MCF 10A (cell line): ENCODE measurements at regions of chr20 and their contacts with region 1.

Region 1: DNA sequence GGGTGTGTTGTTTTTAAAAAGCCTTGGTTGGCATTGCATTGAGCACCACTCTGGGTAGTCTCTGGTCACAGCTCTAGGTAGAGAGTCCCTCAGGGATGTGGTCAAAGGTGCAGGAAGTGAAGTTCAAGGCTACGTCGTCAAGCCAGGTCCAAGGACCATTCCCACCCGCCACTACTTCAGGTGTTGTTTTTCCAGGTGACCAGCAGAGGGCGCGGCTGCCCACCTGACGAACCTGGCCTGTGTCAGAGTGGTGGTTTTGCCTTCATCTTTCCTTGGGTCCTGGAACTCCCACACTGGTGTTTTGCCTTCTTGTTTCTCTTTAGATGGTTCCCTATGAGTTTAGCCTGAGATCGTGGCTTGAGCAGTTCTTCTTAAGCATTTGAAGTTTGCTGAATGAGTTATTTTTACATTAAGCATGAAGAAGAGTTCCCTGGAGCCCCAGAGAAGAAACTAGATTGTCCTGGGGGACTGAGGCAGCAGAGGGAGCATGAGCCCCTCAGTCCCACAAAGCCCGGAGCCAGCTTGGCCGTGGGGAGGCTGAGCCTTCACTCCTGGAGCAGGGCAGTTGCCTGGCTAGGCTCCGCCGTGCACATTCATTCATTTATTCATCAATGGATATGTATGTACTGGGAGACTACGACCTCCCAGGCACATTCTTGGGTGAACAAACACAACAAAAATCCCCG is 5.6 kb upstream of the PHACTR3 start:
- DNase-seq: peak; percentile 53
- H3K4me3 Mint-ChIP-seq: no peak overlapping the region
- H3K27ac Mint-ChIP-seq: no peak overlapping the region
- H3K4me1 Mint-ChIP-seq: no peaks in the 10 kb centered on the region
- H3K27me3 Mint-ChIP-seq: peaks cover 100% of the 10 kb centered on the region
- CTCF ChIP-seq: peak; percentile 79

Region 2: DNA sequence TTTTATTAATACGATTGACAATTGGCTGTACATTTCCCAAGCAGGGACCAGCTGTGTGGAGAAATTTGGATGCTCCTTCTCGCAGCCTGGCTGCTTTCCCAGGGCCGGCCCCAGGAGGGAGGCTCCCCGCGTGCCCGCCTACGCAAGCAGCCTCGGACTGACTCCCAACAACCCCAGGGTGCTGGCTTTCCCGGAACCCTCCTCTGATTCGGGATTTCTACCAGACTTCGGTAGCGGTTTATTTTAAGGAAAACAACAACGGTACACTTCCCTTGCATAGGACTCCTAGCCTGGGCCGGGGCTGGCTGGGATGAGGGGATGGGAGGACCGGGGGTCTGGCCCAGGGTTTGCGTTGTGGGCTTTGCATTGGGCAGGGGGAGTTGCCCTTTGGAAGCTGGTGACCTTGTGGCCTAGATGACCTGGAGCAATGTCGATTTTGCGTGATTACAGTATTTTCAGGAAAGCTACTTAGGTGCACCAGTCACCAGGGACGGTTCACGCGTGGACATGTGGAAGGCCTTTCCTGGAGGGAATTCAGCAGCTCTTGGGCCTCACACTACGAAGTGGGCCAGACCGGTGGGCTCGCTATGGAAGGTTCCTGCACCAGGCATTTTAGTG is 15.2 kb before region 1 on chr20:
- CTCF ChIA-PET with region 1: interaction called, 42 read pairs
- POLR2A ChIA-PET with region 1: no interaction called
- intact Hi-C with region 1: no loop called
- DNase-seq: peak; percentile 47
- H3K4me3 Mint-ChIP-seq: no peak overlapping the region
- H3K27ac Mint-ChIP-seq: no peak overlapping the region
- H3K4me1 Mint-ChIP-seq: no peaks in the 10 kb centered on the region
- H3K27me3 Mint-ChIP-seq: peaks cover 41% of the 10 kb centered on the region
- CTCF ChIP-seq: no peak

Region 3: GRCh38 chr20:59611269-59611668 is 12.5 kb after region 1 on chr20:
- CTCF ChIA-PET with region 1: interaction called, 50 read pairs
- POLR2A ChIA-PET with region 1: interaction called, 3 read pairs
- intact Hi-C with region 1: no loop called
- DNase-seq: no peak
- H3K4me3 Mint-ChIP-seq: no peak overlapping the region
- H3K27ac Mint-ChIP-seq: no peak overlapping the region
- H3K4me1 Mint-ChIP-seq: no peaks in the 10 kb centered on the region
- H3K27me3 Mint-ChIP-seq: peaks cover 100% of the 10 kb centered on the region
- CTCF ChIP-seq: no peak

Region 4: DNA sequence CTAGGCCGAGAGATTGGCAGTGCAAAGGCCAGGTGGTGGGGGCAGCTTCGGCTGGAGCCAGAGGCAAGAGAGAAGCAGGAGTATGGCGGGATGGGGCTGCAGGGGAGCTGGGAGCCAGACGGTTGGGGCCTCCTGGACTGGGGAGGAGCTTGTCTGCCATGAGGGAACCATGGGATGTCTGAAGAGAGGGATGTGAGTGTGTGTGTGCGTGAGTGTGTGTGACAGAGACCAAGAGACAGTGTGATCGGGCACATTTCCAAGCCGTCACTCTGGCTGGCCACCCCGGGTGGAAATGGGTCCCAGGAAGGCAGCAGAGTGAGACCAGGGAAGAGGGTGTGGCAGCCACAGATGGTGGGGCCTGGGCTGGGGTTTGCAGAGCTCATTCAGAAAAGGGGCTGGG is 19.4 kb after region 1 on chr20:
- CTCF ChIA-PET with region 1: interaction called, 22 read pairs
- POLR2A ChIA-PET with region 1: interaction called, 3 read pairs
- intact Hi-C with region 1: no loop called
- DNase-seq: no peak
- H3K4me3 Mint-ChIP-seq: no peak overlapping the region
- H3K27ac Mint-ChIP-seq: no peak overlapping the region
- H3K4me1 Mint-ChIP-seq: no peaks in the 10 kb centered on the region
- H3K27me3 Mint-ChIP-seq: peaks cover 96% of the 10 kb centered on the region
- CTCF ChIP-seq: no peak

Region 5: GRCh38 chr20:59731376-59731775 is 132.6 kb after region 1 on chr20:
- CTCF ChIA-PET with region 1: interaction called, 10 read pairs
- POLR2A ChIA-PET with region 1: no interaction called
- intact Hi-C with region 1: no loop called
- DNase-seq: no peak
- H3K4me3 Mint-ChIP-seq: no peak overlapping the region
- H3K27ac Mint-ChIP-seq: no peak overlapping the region
- H3K4me1 Mint-ChIP-seq: no peaks in the 10 kb centered on the region
- H3K27me3 Mint-ChIP-seq: peaks cover 51% of the 10 kb centered on the region
- CTCF ChIP-seq: no peak

Region 6: DNA sequence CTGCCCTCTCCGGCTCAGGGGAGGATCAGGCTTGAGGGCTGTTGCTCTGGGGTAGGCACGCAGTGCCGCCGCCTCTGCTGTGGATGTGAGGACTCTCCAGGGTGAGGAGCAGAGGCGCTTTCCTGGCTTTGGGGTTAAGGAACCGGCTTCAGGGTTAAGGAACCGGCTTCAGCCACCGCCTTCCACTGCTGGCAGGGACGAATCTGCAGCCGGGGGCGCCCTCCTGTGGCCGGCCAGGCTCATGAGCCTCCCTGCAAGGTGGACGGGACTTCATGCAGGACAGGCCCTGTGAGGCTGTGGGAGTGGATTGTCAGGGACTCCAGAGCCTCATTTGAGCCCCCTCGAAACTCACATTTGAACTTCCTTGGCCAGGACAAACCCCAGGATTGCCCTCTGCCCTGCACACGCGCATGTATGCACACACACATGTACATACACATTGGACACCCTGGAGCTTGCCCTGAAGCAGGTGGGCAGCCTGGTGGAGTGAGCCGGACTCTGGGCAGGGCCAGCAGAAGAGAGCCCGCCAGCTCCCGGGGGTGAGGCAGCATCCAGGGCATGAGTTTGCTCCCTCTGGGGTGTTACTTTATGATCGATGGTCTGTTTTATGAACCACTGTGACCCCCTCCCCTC is 152.4 kb after region 1 on chr20:
- CTCF ChIA-PET with region 1: interaction called, 19 read pairs
- POLR2A ChIA-PET with region 1: no interaction called
- intact Hi-C with region 1: loop called (anchors 1 kb)
- DNase-seq: peak; percentile 56
- H3K4me3 Mint-ChIP-seq: no peak overlapping the region
- H3K27ac Mint-ChIP-seq: no peak overlapping the region
- H3K4me1 Mint-ChIP-seq: no peaks in the 10 kb centered on the region
- H3K27me3 Mint-ChIP-seq: peaks cover 98% of the 10 kb centered on the region
- CTCF ChIP-seq: peak; percentile 88

Region 7: GRCh38 chr20:59850018-59850641 is 251.4 kb after region 1 on chr20:
- CTCF ChIA-PET with region 1: interaction called, 24 read pairs
- POLR2A ChIA-PET with region 1: no interaction called
- intact Hi-C with region 1: loop called (anchors 2 kb)
- DNase-seq: peak; percentile 55
- H3K4me3 Mint-ChIP-seq: no peak overlapping the region
- H3K27ac Mint-ChIP-seq: no peak overlapping the region
- H3K4me1 Mint-ChIP-seq: peaks cover 13% of the 10 kb centered on the region
- H3K27me3 Mint-ChIP-seq: no peaks in the 10 kb centered on the region
- CTCF ChIP-seq: peak; percentile 70